CD4-positive, alpha-beta memory T cell (primary cell): ENCODE measurements at regions of chr7 and their contacts with region 1.

Region 1: GRCh38 chr7:73578342-73579127 is at the start of gene TBL2:
- DNase-seq: peak; percentile 98 to 99 (median 98)
- H3K4me3 ChIP-seq: peak within 1 kb of the TSS; percentile 60 to 78
- H3K4me3 Mint-ChIP-seq: peak within 1 kb of the TSS; percentile 87 to 99 (median 96)
- H3K27ac ChIP-seq: peak within 1 kb of the TSS; percentile 82
- H3K27ac Mint-ChIP-seq: peak within 1 kb of the TSS; percentile 86 to 99 (median 98)
- H3K4me1 ChIP-seq: peaks cover 29% of the 10 kb centered on the region
- H3K4me1 Mint-ChIP-seq: peaks cover 13 to 37% (median 22%) of the 10 kb centered on the region in 4 donors
- H3K27me3 ChIP-seq: no peaks in the 10 kb centered on the region
- H3K27me3 Mint-ChIP-seq: no peaks in the 10 kb centered on the region
- total RNA-seq, gene TBL2: 45.4 to 47.5 TPM

Region 2: DNA sequence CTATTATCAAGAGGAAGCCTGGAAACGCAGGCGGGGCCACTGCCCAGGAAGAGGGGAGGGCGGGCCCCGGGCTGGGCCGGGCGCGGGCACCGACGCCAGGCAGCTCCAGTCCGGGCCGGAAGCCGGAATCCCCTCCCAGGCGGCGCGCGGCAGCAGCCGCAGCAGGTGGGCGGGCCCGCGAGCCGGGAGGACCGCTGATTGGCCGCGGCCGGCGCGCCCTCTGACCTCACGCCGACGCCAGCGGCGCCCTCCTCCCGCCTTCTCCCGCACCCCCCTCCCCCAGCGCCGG is 21.5 kb before region 1 on chr7:
- CTCF ChIA-PET with region 1: no interaction called
- POLR2A ChIA-PET with region 1: interaction called, 39 read pairs
- intact Hi-C with region 1: loop called (anchors 1 kb)
- DNase-seq: peak; percentile 90 to 93 (median 92)
- H3K4me3 ChIP-seq: peak overlapping the region; percentile 67 to 99
- H3K4me3 Mint-ChIP-seq: peak overlapping the region; percentile 89 to 95 (median 92)
- H3K27ac ChIP-seq: peak overlapping the region; percentile 97
- H3K27ac Mint-ChIP-seq: peak overlapping the region; percentile 91 to 96 (median 95)
- H3K4me1 ChIP-seq: peaks cover 44% of the 10 kb centered on the region
- H3K4me1 Mint-ChIP-seq: peaks cover 21 to 41% (median 29%) of the 10 kb centered on the region in 4 donors
- H3K27me3 ChIP-seq: no peaks in the 10 kb centered on the region
- H3K27me3 Mint-ChIP-seq: no peaks in the 10 kb centered on the region

Region 3: DNA sequence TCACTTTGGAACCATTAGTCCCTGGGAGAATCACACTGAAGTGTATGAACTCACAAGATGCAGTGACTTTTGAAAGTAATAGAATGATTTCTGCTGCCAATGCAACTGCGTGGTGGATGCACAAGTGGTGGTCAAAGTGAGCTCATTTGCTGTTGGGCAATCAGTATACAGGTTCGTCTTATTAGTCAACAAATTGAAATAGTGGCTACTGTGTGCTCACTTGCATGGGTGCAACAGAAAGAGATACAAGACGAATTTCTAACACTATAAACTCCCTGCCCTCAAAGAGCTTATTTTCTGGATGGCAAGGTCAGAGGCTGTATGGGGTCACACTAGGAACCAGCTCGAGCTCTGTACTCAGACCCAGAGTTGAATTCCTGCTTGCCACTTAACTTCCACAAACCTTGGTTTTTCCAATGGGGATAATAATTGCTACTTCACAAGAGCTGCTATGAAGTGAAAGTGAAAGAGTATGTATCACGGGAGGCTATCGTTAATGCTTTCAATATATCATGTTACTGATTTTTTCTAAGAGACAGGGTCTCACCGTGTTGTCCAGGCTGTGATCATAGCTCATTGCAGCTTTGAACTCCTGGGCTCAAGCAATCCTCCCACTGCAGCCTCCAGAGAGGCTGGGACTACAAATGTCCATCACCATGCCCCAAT is 12.7 kb before region 1 on chr7:
- CTCF ChIA-PET with region 1: interaction called, 12 read pairs
- POLR2A ChIA-PET with region 1: interaction called, 16 read pairs
- intact Hi-C with region 1: no loop called
- DNase-seq: no peak
- H3K4me3 ChIP-seq: peak overlapping the region; percentile 51 to 57
- H3K4me3 Mint-ChIP-seq: peak overlapping the region; percentile 74 to 93 (median 87)
- H3K27ac ChIP-seq: peak overlapping the region; percentile 43
- H3K27ac Mint-ChIP-seq: peak overlapping the region; percentile 39 to 91 (median 87)
- H3K4me1 ChIP-seq: peaks cover 16% of the 10 kb centered on the region
- H3K4me1 Mint-ChIP-seq: peaks cover 15 to 32% (median 23%) of the 10 kb centered on the region in 4 donors
- H3K27me3 ChIP-seq: no peaks in the 10 kb centered on the region
- H3K27me3 Mint-ChIP-seq: no peaks in the 10 kb centered on the region

Region 4: GRCh38 chr7:74002474-74003017 is 424.0 kb after region 1 on chr7:
- CTCF ChIA-PET with region 1: no interaction called
- POLR2A ChIA-PET with region 1: no interaction called
- intact Hi-C with region 1: no loop called
- DNase-seq: no peak
- H3K4me3 ChIP-seq: no peak overlapping the region
- H3K4me3 Mint-ChIP-seq: peak overlapping the region in 3 of 8 donors; percentile 30 to 51 (median 33)
- H3K27ac ChIP-seq: no peak overlapping the region
- H3K27ac Mint-ChIP-seq: peak overlapping the region in 4 of 7 donors; percentile 43 to 67 (median 57)
- H3K4me1 ChIP-seq: no peaks in the 10 kb centered on the region
- H3K4me1 Mint-ChIP-seq: peaks cover 3 to 17% (median 10%) of the 10 kb centered on the region in 4 donors
- H3K27me3 ChIP-seq: no peaks in the 10 kb centered on the region
- H3K27me3 Mint-ChIP-seq: peaks cover 5% of the 10 kb centered on the region in 2 donors